Activated B cell treated with CpG ODN at 0.5 μM for 24 hours (primary cell): ENCODE measurements at regions of chr11 and their contacts with region 1.

Region 1: GRCh38 chr11:65575568-65576231 is at the start of gene EHBP1L1:
- DNase-seq: peak; percentile 76
- ATAC-seq: peak; percentile 22
- H3K4me3 Mint-ChIP-seq: peak within 1 kb of the TSS; percentile 91
- H3K27ac Mint-ChIP-seq: peak within 1 kb of the TSS; percentile 93
- H3K4me1 Mint-ChIP-seq: peaks cover 64% of the 10 kb centered on the region
- H3K27me3 Mint-ChIP-seq: no peaks in the 10 kb centered on the region
- CTCF ChIP-seq: no peak
- total RNA-seq, gene EHBP1L1: 143 and 163 TPM in 2 replicates

Region 2: DNA sequence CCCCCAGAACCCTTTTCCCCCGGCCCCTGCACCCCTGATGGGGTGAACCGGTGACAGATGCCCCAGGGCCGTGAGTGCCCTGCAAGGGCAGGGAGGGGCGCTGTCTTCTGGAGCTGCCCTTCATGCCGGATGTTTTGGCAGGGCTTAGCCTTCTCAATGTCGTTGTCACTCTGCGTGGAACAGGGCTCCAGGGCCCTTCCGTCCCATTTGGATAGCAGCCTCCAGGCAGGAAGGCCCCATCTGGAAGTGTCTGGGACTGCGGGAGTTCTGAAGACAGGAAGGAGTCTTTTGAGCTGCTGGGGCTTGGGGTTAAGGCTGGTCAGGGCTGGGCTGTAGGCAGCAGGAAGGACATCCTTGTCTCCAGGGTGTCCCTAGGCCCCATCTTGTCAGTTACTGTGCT is 184.7 kb before region 1 on chr11:
- CTCF ChIA-PET with region 1: no interaction called
- POLR2A ChIA-PET with region 1: no interaction called
- intact Hi-C with region 1: no loop called
- DNase-seq: no peak
- ATAC-seq: no peak
- H3K4me3 Mint-ChIP-seq: peak overlapping the region; percentile 19
- H3K27ac Mint-ChIP-seq: no peak overlapping the region
- H3K4me1 Mint-ChIP-seq: peaks cover 56% of the 10 kb centered on the region
- H3K27me3 Mint-ChIP-seq: no peaks in the 10 kb centered on the region
- CTCF ChIP-seq: no peak

Region 3: GRCh38 chr11:65459552-65459951 is 116.1 kb before region 1 on chr11:
- CTCF ChIA-PET with region 1: no interaction called
- POLR2A ChIA-PET with region 1: no interaction called
- intact Hi-C with region 1: no loop called
- DNase-seq: no peak
- ATAC-seq: no peak
- H3K4me3 Mint-ChIP-seq: no peak overlapping the region
- H3K27ac Mint-ChIP-seq: no peak overlapping the region
- H3K4me1 Mint-ChIP-seq: peaks cover 27% of the 10 kb centered on the region
- H3K27me3 Mint-ChIP-seq: no peaks in the 10 kb centered on the region
- CTCF ChIP-seq: no peak

Region 4: GRCh38 chr11:65546217-65546958 is 29.3 kb before region 1 on chr11:
- CTCF ChIA-PET with region 1: interaction called, 40 read pairs
- POLR2A ChIA-PET with region 1: interaction called, 34 read pairs
- intact Hi-C with region 1: loop called (anchors 1 kb)
- DNase-seq: peak; percentile 99
- ATAC-seq: peak; percentile 89
- H3K4me3 Mint-ChIP-seq: peak overlapping the region; percentile 85
- H3K27ac Mint-ChIP-seq: peak overlapping the region; percentile 89
- H3K4me1 Mint-ChIP-seq: peaks cover 54% of the 10 kb centered on the region
- H3K27me3 Mint-ChIP-seq: no peaks in the 10 kb centered on the region
- CTCF ChIP-seq: no peak

Region 5: DNA sequence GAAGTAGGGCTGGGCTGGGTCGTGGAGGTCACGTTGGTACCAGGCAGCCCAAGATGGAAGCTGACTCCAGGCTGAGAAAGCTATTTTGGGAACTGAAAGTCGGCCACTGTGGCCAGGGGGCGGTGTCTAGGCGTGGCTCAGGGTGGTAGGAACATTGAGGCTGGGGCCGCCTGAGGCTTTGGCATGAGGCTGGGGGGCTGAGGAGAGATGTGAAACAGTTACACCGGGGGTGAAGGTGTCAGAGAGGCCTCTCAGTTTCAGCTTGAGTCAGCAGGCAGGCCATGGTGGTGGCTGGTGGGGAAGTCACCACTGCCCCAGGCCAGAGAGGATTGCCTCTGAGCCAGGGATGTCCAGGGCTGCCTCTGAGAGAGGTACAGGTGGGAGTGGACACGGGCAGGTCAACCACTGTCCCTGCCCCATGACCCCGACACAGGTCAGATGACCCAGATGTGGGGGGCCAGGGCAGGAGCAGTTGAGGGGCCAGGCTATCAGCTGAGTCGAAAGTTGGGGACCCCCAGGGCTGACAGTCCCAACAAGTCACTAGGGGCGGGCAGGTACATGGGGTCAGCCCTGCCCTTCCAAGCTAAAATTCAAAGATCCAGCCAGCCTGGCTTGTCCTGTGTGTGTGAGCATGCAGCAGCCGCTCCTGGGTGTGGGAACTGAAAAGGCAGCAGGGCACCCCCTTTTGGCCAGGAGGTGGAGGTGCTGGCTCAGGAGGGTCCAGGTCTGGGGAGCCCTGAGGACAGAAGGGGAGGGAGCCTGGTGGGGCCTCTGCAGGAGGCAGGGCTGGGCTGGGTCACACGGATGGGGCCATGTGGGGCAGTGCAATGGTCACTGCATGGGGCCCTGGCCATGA is 12.7 kb after region 1 on chr11:
- CTCF ChIA-PET with region 1: interaction called, 67 read pairs
- POLR2A ChIA-PET with region 1: interaction called, 239 read pairs
- intact Hi-C with region 1: loop called (anchors 1 kb)
- DNase-seq: peak; percentile 76
- ATAC-seq: peak; percentile 80
- H3K4me3 Mint-ChIP-seq: peak overlapping the region; percentile 70
- H3K27ac Mint-ChIP-seq: peak overlapping the region; percentile 96
- H3K4me1 Mint-ChIP-seq: peaks cover 44% of the 10 kb centered on the region
- H3K27me3 Mint-ChIP-seq: no peaks in the 10 kb centered on the region
- CTCF ChIP-seq: peak; percentile 38

Region 6: DNA sequence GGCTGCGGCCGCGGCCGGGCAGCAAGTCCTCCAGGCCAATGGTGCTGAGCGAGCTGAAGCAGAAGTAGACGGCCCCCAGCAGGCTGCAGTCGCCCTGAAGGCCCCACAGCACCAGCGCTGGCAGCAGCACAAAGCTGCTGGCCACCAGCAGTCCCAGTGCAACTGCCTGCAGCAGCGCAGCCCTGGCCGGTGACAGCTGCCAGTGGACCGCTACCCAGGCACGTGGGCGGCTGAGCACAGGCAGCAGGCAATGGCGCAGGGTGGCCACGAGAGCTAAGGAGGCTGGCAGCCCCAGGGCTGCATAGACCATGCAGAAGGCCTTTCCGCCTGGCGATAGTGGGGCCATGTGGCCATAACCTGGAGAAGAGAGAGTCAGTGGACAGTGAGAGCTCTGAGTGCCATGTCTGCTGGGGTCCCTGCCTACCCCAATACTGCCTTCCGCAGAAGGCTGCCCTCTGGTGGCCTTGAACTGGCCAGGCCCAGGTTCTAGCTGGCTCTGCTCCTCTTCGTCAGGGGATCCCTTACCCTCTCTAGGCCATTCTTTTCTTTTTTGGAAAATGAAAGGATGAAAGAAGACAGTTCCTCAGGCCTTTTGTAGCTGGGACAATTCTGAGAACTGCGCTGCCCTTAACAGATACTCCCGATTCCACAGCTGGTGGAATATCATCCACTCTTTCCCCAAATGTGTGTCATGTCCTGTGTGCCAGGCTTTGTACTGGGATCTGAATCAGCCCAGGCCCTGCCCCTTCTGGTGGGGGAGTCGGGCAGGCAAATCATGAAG is 18.0 kb after region 1 on chr11:
- CTCF ChIA-PET with region 1: interaction called, 67 read pairs
- POLR2A ChIA-PET with region 1: interaction called, 239 read pairs
- intact Hi-C with region 1: loop called (anchors 1 kb)
- DNase-seq: no peak
- ATAC-seq: peak; percentile 41
- H3K4me3 Mint-ChIP-seq: no peak overlapping the region
- H3K27ac Mint-ChIP-seq: no peak overlapping the region
- H3K4me1 Mint-ChIP-seq: peaks cover 24% of the 10 kb centered on the region
- H3K27me3 Mint-ChIP-seq: no peaks in the 10 kb centered on the region
- CTCF ChIP-seq: peak; percentile 37